ENCODE measurements at regions of chr14 and their contacts with region 1.

Region 1: GRCh38 chr14:99378782-99379214 is 101.9 kb downstream of the SETD3 start:
- DNase-seq: no peak
- CTCF ChIP-seq: no peak

Region 2: DNA sequence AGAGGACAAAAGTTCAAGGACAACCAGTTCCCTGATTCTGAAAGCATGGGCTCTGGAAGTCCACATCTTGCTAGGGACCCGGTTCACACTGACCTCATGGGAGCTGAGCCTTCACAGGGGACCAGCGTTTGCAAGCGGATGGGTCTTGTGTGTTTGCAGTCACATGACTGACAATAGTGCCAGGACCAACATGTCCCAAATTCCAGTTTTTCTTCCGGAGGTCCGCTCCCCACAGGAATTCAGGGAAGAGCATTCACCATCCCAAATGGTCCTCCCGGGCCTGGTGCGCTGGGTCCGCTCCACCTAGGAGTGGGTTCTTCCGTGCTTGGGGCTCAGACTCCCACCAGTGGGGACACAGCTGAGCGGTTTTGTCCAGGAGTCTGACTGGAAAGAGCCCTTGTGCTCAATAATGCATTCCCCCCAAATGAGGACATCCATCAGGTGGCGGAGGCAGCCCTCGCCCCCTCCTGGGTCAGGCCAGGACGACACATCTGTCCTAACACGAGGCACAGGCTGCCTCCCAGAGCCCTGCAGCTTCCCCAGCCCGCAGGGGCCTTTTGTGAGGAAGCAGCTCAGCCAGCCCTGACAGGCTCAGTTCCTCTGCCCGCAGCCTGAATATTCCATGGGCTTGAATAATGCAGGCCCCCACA is 15.1 kb before region 1 on chr14:
- CTCF ChIA-PET with region 1: no interaction called
- POLR2A ChIA-PET with region 1: no interaction called
- DNase-seq: no peak
- CTCF ChIP-seq: no peak

Region 3: GRCh38 chr14:99393047-99393655 is 14.4 kb after region 1 on chr14:
- CTCF ChIA-PET with region 1: interaction called, 25 read pairs
- POLR2A ChIA-PET with region 1: no interaction called
- DNase-seq: peak; percentile 67
- CTCF ChIP-seq: peak; percentile 67

Measured in GM10248 (cell line).